ENCODE measurements at regions of chr14 and their contacts with region 1.

Region 1: DNA sequence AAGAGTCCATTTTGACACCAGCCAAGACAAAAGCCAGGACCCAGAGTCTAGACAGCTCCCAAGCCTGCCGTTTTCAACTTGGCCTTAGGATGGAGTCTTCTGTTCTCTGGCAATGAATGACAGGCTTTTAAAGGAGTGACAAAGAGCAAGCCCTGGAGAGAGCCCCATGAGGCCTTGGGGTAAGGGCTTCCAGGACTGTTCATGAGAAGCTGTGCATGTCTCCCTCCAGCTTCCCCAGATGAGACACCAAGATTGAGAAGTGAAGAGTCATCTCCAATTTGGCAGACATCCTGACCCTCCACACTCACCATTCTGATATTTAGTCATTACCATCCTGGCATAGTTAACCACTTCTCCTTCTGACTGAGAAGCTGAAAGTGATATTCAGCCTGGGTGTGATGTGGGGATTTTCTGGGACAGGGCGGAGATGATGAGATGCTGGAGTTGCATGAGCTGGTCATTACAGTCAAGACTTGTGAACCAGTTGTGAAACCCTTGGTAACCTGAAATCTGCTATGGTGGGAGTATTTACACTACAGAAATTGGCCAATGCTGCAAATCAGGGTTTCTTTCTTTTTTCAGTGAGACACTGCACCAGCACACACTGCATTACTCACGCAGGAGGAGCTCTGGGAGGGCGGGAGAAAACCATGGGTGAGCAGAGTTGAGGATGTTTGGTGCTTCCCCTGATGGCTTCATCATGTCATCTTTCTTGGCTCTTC is 77.8 kb downstream of the VCPKMT start:
- DNase-seq: peak in 1 of 2 experiments; percentile 79
- H3K4me3 ChIP-seq: no peak overlapping the region
- H3K27ac ChIP-seq: peak overlapping the region; percentile 98
- H3K4me1 ChIP-seq: peaks cover 78% of the 10 kb centered on the region
- H3K27me3 ChIP-seq: no peaks in the 10 kb centered on the region
- CTCF ChIP-seq: no peak; the same call in 1 of the 2 replicates

Region 2: DNA sequence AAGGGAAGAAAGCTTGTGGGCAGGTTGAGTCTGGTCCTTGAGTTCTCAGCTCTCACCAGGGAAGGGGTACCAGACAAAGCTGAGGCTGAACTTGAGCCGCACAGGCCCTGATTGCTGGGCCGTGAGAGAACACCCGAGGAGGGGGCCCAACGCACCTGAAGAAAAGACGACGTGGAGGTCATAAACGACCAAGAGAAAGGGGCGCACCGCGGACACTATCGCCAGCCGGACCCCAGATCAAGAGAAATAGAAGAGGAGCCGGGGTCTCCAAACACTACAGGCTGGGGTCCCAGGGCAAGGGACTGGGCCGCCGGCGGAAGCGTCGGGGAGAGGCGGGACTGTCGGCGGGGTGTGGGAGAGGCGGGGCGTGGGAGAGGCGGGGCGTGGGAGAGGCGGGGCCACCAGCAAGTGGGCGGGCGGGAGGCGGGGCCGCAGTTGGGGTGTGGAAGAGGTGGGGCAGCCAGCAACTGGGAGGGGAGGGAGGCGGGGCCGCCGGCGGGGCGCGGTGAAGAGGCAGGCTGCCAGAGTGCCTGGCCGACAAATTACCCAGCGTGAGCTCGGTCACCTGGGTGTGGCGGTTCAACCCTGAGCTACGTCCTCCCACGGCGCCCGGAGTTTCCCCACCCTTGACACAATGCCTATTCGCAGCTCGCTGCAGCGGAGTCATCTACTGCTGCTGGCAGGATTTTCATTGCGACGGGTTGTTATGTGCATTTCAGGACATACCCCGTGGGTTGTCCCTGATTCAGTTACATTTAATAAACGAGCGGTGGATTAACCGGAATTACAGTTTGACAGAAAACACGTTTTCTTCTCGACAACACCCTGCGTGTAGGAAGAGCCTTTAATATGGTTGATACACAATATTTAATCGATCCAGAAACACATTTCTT is 170.5 kb before region 1 on chr14:
- CTCF ChIA-PET with region 1: no interaction called
- POLR2A ChIA-PET with region 1: interaction called, 23 read pairs
- intact Hi-C with region 1: no loop called
- DNase-seq: peak; percentile 88 to 94
- H3K4me3 ChIP-seq: peak overlapping the region; percentile 85
- H3K27ac ChIP-seq: peak overlapping the region; percentile 78
- H3K4me1 ChIP-seq: peaks cover 32% of the 10 kb centered on the region
- H3K27me3 ChIP-seq: no peaks in the 10 kb centered on the region
- CTCF ChIP-seq: no peak

Region 3: GRCh38 chr14:49971156-49972130 is 67.1 kb before region 1 on chr14:
- CTCF ChIA-PET with region 1: no interaction called
- POLR2A ChIA-PET with region 1: no interaction called
- intact Hi-C with region 1: loop called (anchors 1 kb)
- DNase-seq: no peak
- H3K4me3 ChIP-seq: peak overlapping the region; percentile 40; the same call in 1 of the 2 replicates
- H3K27ac ChIP-seq: peak overlapping the region; percentile 97
- H3K4me1 ChIP-seq: peaks cover 81% of the 10 kb centered on the region
- H3K27me3 ChIP-seq: no peaks in the 10 kb centered on the region
- CTCF ChIP-seq: no peak

Region 4: DNA sequence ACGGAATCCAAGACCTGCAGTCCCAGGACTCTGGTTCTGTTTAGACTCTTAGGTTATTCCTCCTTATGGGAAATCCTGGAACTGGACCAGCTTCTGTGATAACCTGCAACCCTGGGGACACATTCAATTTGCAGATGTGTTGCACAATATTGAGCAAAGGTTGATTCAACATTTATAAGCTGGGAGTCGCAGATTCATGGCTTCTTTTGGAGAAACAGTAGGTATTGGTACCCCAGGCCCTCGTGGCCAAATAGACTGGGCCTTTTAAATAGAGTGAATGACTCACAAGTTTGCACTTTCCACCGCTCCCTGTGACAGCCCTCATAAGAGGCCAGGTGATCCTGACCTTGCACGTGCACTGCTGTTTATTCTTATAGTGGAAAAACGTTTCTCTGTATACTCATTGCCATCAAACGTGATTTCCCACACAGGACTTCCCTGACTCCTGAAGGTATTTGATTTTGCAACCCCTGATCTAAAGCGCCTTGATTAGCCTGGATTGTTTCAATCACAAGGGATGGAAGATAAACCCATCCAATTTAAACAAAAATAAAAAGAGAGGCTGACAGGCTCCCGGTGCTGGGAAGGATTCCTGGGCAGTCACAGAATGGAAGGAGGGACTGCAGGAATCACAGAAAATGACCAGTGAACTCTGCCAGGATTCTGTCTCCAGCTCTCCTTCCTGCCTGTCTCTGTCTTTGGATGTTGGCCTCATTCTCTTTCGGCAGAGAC is 20.2 kb before region 1 on chr14:
- CTCF ChIA-PET with region 1: no interaction called
- POLR2A ChIA-PET with region 1: no interaction called
- intact Hi-C with region 1: loop called (anchors 1 kb)
- DNase-seq: peak; percentile 43 to 88
- H3K4me3 ChIP-seq: no peak overlapping the region
- H3K27ac ChIP-seq: peak overlapping the region; percentile 72
- H3K4me1 ChIP-seq: peaks cover 52% of the 10 kb centered on the region
- H3K27me3 ChIP-seq: no peaks in the 10 kb centered on the region
- CTCF ChIP-seq: no peak

Region 5: DNA sequence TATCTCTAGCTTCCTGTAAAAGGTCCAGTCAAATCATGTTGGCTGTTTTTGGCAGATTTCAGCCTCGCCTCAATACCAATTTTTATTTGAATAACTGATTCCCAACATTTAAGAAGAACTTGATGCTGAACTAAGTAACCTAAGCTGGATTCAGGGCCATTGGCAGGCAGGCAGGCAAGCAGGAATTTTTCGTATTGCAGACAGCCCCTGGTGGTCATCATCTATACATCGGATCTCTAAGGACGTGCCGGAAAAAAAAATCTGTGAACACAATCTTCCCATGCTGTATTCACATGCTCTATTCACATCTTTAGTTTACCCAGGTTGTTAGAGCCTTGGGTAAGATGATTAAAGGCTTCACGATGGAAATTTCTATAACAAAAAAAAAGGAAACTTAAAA is 70.8 kb after region 1 on chr14:
- CTCF ChIA-PET with region 1: interaction called, 3 read pairs
- POLR2A ChIA-PET with region 1: interaction called, 7 read pairs
- intact Hi-C with region 1: loop called (anchors 2 kb)
- DNase-seq: no peak
- H3K4me3 ChIP-seq: no peak overlapping the region
- H3K27ac ChIP-seq: no peak overlapping the region
- H3K4me1 ChIP-seq: peaks cover 7% of the 10 kb centered on the region; the same call in 1 of the 2 replicates
- H3K27me3 ChIP-seq: no peaks in the 10 kb centered on the region
- CTCF ChIP-seq: peak; percentile 34

Region 6: GRCh38 chr14:50198499-50198898 is 159.9 kb after region 1 on chr14:
- CTCF ChIA-PET with region 1: interaction called, 12 read pairs
- POLR2A ChIA-PET with region 1: no interaction called
- intact Hi-C with region 1: no loop called
- DNase-seq: no peak
- H3K4me3 ChIP-seq: no peak overlapping the region
- H3K27ac ChIP-seq: no peak overlapping the region
- H3K4me1 ChIP-seq: no peaks in the 10 kb centered on the region
- H3K27me3 ChIP-seq: no peaks in the 10 kb centered on the region
- CTCF ChIP-seq: no peak